ENCODE measurements at regions of chr19 and their contacts with region 1.

Region 1: DNA sequence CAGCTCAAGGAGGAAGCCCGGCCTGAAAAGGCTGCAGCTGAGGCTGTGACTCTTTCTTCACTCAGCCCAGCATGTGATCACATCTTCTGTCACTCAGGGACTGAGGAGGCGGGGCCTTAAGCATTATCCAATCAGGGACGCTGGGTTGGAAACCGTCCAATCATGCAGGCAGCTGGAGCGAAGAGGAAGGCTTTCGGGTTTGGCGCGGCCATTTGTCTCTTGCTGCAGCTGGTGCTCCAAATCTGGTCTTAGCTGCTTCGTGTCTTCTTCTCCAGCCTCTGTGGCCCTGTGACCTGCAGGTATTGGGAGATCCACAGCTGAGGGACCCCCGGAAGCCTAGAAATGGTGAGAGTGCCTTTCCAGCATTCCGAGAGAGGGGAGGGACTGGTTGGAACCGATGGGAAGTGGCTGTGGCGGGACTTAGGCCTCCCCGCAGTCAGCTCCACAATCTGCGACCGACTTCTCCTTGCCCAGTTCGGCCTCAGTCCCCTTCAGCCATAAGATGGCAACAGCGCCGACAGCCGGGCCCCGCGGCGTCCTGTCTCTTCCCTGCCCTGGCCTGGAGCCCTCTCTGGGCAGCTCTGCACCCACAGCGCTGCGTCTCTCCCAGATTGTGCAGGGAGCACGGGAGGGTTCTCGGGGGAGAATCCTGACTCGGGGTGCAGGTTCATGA is at the start of gene ZNF90:
- DNase-seq: peak; percentile 87 to 97
- ATAC-seq: peak; percentile 94 to 99 (median 98)
- H3K4me3 ChIP-seq: peak within 1 kb of the TSS; percentile 37 to 77 (median 57)
- H3K27ac ChIP-seq: peak within 1 kb of the TSS in 4 of 10 donors; percentile 8 to 49 (median 26)
- H3K4me1 ChIP-seq: peaks cover 0 to 23% (median 12%) of the 10 kb centered on the region in 9 donors
- H3K27me3 ChIP-seq: no peaks in the 10 kb centered on the region
- CTCF ChIP-seq: peak in 1 of 9 donors; percentile 8
- total RNA-seq, gene ZNF90: 0.47 to 2.0 (median 0.75) TPM

Region 2: DNA sequence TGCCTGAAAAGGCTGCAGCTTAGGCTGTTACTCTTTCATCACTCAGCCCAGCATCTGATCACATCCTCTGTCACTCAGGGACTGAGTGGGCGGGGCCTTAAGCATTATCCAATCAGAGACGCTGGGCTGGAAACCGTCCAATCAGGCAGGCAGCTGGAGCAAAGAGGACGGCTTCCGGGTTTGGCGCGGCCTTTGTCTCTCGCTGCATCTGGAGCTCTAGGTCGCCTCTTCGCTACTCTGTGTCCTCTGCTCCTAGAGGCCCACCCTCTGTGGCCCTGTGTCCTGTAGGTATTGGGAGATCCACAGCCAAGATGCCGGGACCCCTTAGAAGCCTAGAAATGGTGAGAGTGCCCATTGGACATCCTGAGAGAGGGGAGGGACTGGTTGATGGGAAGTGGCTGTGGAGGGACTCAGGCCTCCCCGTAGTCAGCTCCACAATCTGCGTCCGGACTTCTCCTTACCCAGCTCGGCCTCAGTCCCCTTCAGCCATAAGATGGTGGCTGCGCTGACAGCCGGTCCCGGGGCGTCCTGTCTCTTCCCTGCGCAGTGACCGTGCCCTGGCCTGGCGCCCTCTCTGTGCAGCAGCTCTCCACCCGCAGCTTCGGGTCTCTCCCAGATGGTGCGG is 89.2 kb after region 1 on chr19 and contains the start of gene ZNF486:
- intact Hi-C with region 1: loop called in 1 of 10 experiments (anchors 10 kb)
- DNase-seq: peak; percentile 94 to 97
- ATAC-seq: peak; percentile 97 to 99 (median 98)
- H3K4me3 ChIP-seq: peak within 1 kb of the TSS; percentile 61 to 87 (median 76)
- H3K27ac ChIP-seq: peak within 1 kb of the TSS in 9 of 10 donors; percentile 54 to 87 (median 71)
- H3K4me1 ChIP-seq: peaks cover 0 to 17% (median 9%) of the 10 kb centered on the region in 9 donors
- H3K27me3 ChIP-seq: no peaks in the 10 kb centered on the region
- CTCF ChIP-seq: no peak
- total RNA-seq, gene ZNF486: 1.0 to 2.6 (median 2.3) TPM

Region 3: GRCh38 chr19:20237761-20238623 is 160.1 kb after region 1 on chr19:
- intact Hi-C with region 1: loop called in 1 of 10 experiments (anchors 10 kb)
- DNase-seq: peak; percentile 90 to 93
- ATAC-seq: peak; percentile 92 to 97 (median 96)
- H3K4me3 ChIP-seq: peak overlapping the region; percentile 34 to 78 (median 64)
- H3K27ac ChIP-seq: peak overlapping the region in 9 of 10 donors; percentile 7 to 71 (median 55)
- H3K4me1 ChIP-seq: peaks cover 0 to 29% (median 8%) of the 10 kb centered on the region in 9 donors
- H3K27me3 ChIP-seq: no peaks in the 10 kb centered on the region
- CTCF ChIP-seq: peak in 2 of 9 donors; percentile 9 to 21